ENCODE measurements at regions of chr2 and their contacts with region 1.

Region 1: GRCh38 chr2:126776692-126777619 is 121.0 kb downstream of the GYPC start:
- DNase-seq: peak in 1 of 2 donors; percentile 87
- H3K4me3 ChIP-seq: peak overlapping the region; percentile 65 to 71
- H3K27ac ChIP-seq: peak overlapping the region; percentile 24 to 63
- H3K4me1 ChIP-seq: no peaks in the 10 kb centered on the region
- H3K27me3 ChIP-seq: no peaks in the 10 kb centered on the region
- CTCF ChIP-seq: peak; percentile 74 to 97 (median 95)

Region 2: GRCh38 chr2:126244937-126245336 is 532.0 kb before region 1 on chr2:
- intact Hi-C with region 1: loop called (anchors 10 kb)
- DNase-seq: no peak
- H3K4me3 ChIP-seq: no peak overlapping the region
- H3K27ac ChIP-seq: no peak overlapping the region
- H3K4me1 ChIP-seq: no peaks in the 10 kb centered on the region
- H3K27me3 ChIP-seq: no peaks in the 10 kb centered on the region
- CTCF ChIP-seq: peak in 1 of 3 experiments; percentile 20

Region 3: DNA sequence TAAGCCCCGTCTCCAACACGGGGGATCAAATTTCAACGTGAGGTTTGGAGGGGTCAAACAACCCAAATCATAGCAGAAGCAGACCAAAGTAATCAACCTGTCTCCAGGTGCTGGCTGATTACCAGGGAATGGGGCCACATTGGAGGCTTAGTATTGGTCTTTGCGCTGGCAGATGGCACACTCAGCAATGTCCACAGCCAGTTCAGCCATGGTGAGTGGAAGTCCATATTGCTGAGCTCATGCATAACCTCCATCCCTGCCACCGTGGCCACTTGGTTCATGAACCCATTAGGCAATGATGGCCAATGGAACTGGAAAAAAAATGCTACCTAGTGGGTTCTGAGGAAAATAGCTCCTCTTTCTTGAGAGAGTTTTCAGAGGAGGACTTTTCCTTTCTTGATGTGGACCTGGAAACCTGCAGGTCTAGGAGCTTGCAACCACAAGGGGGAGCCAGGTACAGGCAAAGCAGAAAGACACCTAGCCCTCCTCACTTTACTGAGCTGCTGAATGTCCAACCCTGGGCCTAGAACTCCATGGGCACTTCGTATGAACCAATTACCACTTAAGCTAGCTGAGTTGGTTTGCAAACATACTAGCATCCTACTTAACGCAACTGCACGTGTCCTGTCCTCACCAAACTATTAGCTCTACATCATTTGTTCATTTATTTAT is 249.0 kb before region 1 on chr2:
- intact Hi-C with region 1: loop called (anchors 1 kb)
- DNase-seq: peak in 1 of 2 donors; percentile 81
- H3K4me3 ChIP-seq: no peak overlapping the region
- H3K27ac ChIP-seq: no peak overlapping the region
- H3K4me1 ChIP-seq: no peaks in the 10 kb centered on the region
- H3K27me3 ChIP-seq: no peaks in the 10 kb centered on the region
- CTCF ChIP-seq: peak; percentile 38 to 60 (median 52)

Region 4: DNA sequence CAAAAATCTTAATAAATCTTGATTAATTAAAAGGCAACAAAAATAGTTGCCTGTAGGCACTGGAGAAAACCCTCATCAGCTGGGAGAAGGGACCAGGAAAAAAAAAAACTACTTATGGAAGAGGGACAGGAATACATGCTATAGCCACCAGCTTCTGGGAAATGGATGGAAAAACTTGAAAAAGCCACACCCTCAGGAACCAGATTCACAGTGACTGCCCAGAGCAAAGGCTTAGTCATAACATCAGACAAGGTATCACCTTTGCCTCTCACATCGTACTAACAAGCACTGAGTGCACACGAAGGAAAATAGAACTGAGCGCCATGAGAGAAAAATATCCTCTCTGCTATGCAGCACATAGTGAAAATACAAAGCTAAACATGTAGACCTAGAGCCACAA is 237.9 kb before region 1 on chr2:
- intact Hi-C with region 1: no loop called
- DNase-seq: no peak
- H3K4me3 ChIP-seq: no peak overlapping the region
- H3K27ac ChIP-seq: no peak overlapping the region
- H3K4me1 ChIP-seq: no peaks in the 10 kb centered on the region
- H3K27me3 ChIP-seq: no peaks in the 10 kb centered on the region
- CTCF ChIP-seq: no peak

Region 5: GRCh38 chr2:126657636-126658318 is 119.2 kb before region 1 on chr2:
- intact Hi-C with region 1: loop called (anchors 2 kb)
- DNase-seq: peak; percentile 68 to 95
- H3K4me3 ChIP-seq: peak overlapping the region; percentile 79 to 90
- H3K27ac ChIP-seq: peak overlapping the region; percentile 98 to 99
- H3K4me1 ChIP-seq: peaks cover 20 to 53% of the 10 kb centered on the region in 2 donors
- H3K27me3 ChIP-seq: no peaks in the 10 kb centered on the region
- CTCF ChIP-seq: peak in 1 of 3 experiments; percentile 4